PC-9 (cell line): ENCODE measurements at regions of chr11 and their contacts with region 1.

Region 1: GRCh38 chr11:118607401-118608359 is at the start of gene PHLDB1:
- DNase-seq: peak in 1 of 2 experiments; percentile 61
- H3K4me3 ChIP-seq: peak within 1 kb of the TSS; percentile 70
- H3K27ac ChIP-seq: no peak within 1 kb of the TSS
- H3K4me1 ChIP-seq: peaks cover 6% of the 10 kb centered on the region; the same call in 1 of the 2 replicates
- H3K27me3 ChIP-seq: peaks cover 13% of the 10 kb centered on the region; the same call in 1 of the 2 replicates
- CTCF ChIP-seq: peak; percentile 63
- total RNA-seq, gene PHLDB1: 122 and 125 TPM in 2 replicates

Region 2: GRCh38 chr11:118640332-118641154 is 32.9 kb after region 1 on chr11:
- CTCF ChIA-PET with region 1: no interaction called
- POLR2A ChIA-PET with region 1: no interaction called
- intact Hi-C with region 1: loop called (anchors 5 kb)
- DNase-seq: no peak
- H3K4me3 ChIP-seq: no peak overlapping the region
- H3K27ac ChIP-seq: no peak overlapping the region
- H3K4me1 ChIP-seq: peaks cover 4% of the 10 kb centered on the region; the same call in 1 of the 2 replicates
- H3K27me3 ChIP-seq: no peaks in the 10 kb centered on the region
- CTCF ChIP-seq: peak; percentile 64

Region 3: DNA sequence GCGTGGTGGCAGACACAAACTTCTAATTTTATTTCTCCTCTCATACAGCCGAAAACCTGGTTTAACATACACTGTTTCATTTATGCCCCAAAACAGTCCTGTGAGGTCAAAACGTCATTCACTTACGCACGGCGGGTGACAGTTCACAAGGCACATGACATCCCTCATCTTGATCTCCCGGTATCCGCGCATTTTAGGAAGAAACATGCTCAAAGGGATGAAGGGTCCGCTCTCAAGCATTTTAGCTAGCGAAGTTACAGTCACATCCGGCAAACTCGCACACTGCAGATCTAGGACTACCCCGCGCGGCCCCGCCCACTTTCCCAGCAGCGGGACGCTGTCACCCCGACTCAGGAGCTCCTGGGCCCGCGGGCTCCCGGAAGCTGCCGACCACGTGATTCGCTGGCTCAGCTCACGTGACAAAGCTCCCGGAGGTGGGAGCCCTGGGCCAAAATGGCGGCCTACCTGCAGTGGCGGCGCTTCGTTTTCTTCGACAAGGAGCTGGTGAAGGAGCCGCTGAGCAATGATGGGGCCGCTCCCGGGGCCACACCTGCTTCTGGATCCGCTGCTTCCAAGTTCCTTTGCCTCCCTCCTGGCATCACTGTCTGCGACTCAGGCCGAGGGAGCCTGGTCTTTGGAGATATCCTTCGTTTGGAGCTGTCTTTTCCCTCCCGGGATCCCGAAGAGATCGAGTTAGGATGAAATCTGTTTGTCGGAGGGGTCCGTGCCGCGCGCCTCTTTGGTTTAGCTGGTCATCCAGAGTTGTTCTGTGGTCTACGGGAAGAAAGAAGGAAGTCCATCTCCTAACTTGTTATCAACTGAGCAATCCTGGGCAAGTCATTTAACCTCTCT is 459.9 kb after region 1 on chr11 and contains the start of gene VPS11:
- CTCF ChIA-PET with region 1: interaction called, 12 read pairs
- POLR2A ChIA-PET with region 1: no interaction called
- intact Hi-C with region 1: no loop called
- DNase-seq: peak; percentile 95 to 96
- H3K4me3 ChIP-seq: peak within 1 kb of the TSS; percentile 89
- H3K27ac ChIP-seq: peak within 1 kb of the TSS; percentile 55
- H3K4me1 ChIP-seq: peaks cover 8% of the 10 kb centered on the region
- H3K27me3 ChIP-seq: no peaks in the 10 kb centered on the region
- CTCF ChIP-seq: 0 out of 2 replicates have a peak, but pooled peaks have one; percentile 14
- total RNA-seq, gene VPS11: 21.1 and 22.9 TPM in 2 replicates